Prostate gland (tissue), 2 donors: ENCODE measurements at regions of chr4 and their contacts with region 1.

Region 1: DNA sequence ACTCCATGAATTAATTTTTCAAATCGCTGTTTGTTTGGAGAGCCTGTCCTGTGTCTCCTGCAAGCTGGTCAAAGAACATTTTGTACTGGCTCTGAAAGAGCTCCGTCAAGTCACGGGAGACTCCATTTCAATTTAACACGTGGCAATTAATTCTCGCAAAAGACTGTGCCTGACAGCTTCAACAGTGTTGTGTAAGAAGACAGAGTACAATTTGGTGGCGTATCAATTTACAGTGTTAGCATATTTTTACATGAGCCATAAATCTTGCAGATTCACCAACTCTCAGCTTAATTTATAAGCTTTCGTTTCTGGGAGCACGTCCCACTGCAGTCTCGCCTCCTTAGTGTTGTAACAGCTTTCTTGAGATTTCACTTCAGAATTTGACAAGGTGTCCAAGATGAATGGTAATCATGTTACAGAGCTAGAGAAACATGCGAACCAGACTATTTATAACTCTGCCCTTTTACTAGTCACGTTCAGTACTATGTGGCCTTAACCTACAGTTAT is 70.8 kb downstream of the RWDD4 start:
- DNase-seq: peak; percentile 58
- H3K4me3 ChIP-seq: no peak overlapping the region
- H3K27ac ChIP-seq: peak overlapping the region; percentile 61 to 71
- H3K4me1 ChIP-seq: no peaks in the 10 kb centered on the region
- H3K27me3 ChIP-seq: no peaks in the 10 kb centered on the region
- CTCF ChIP-seq: no peak
- POLR2A ChIP-seq: no peak

Region 2: DNA sequence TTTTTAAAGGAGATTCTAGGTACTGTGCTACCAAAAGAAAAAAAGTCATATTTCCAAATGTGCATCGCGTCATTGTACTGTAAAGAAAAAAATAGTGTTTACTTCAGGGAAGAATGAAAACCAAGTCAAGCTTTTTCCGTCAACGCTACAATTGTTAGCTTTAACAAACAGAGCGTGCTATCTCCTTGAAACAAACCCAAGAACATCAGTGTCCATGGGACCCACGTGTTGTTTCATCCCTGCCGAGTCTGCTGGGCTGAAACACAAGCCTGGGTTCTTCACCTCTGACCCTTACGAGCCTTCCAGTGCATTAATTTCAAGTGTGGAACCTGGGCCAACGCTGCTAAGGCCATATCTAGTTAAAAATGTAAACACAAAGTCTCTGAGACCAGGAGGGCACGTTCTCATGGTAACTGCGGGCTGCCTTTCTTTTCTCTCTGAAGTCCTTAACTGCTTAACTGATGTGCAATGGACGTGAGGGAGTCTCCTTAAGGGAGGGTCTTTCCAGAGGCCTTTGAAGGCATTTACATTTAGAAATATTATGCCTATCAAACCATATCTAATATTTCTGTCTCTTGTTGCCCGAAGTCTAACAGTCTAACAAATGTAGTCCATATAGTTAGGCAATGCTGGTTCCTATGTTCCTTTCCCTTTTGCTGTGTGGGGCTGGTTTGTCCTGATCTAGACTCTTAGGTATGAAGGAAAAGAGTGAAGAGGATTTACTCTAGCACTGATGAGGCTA is 47.0 kb before region 1 on chr4:
- intact Hi-C with region 1: loop called (anchors 2 kb)
- DNase-seq: no peak
- H3K4me3 ChIP-seq: no peak overlapping the region
- H3K27ac ChIP-seq: no peak overlapping the region
- H3K4me1 ChIP-seq: no peaks in the 10 kb centered on the region
- H3K27me3 ChIP-seq: no peaks in the 10 kb centered on the region
- CTCF ChIP-seq: no peak
- POLR2A ChIP-seq: no peak

Region 3: GRCh38 chr4:183840311-183840710 is 252.1 kb after region 1 on chr4:
- intact Hi-C with region 1: no loop called
- DNase-seq: peak; percentile 77
- H3K4me3 ChIP-seq: no peak overlapping the region
- H3K27ac ChIP-seq: no peak overlapping the region
- H3K4me1 ChIP-seq: no peaks in the 10 kb centered on the region
- H3K27me3 ChIP-seq: no peaks in the 10 kb centered on the region
- CTCF ChIP-seq: peak; percentile 77 to 91 (median 90)
- POLR2A ChIP-seq: no peak